Motor neuron (in vitro differentiated cells): ENCODE measurements at regions of chr17 and their contacts with region 1.

Region 1: DNA sequence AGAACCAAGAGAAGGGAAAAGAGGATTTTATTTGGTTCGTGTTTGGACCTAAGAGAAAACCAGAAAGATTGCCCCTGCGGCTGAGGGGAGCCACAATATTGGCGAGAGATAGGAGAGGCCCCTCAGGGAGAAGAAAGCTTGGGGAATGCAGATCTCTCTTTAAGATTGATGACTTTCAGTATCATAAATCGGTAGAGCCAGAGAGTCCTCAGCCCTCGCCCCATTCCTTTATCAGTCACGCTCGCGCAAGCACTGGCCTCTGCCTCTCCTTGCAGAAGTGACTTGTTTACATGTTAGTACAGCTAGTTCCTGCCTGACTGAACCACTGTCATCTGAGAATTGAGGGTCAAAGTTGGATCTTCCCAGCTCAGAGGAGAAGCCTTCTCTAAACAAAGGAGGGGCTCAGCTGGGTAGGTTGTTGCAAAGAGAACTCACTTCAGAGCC is 21.5 kb upstream of the KRT19 start:
- ATAC-seq: no peak
- H3K4me3 ChIP-seq: no peak overlapping the region
- H3K27ac ChIP-seq: no peak overlapping the region
- H3K4me1 ChIP-seq: peaks cover 10 to 14% of the 10 kb centered on the region in 2 donors

Region 2: GRCh38 chr17:41648411-41649195 is 99.0 kb after region 1 on chr17:
- in situ Hi-C with region 1: loop called in 3 of 9 experiments (anchors 10 to 25 kb)
- ATAC-seq: peak; percentile 77 to 90 (median 80)
- H3K4me3 ChIP-seq: peak overlapping the region in 2 of 5 donors; percentile 3 to 15
- H3K27ac ChIP-seq: no peak overlapping the region
- H3K4me1 ChIP-seq: no peaks in the 10 kb centered on the region